Activated B cell treated with CpG ODN at 0.5 μM for 24 hours (primary cell): ENCODE measurements at regions of chr16 and their contacts with region 1.

Region 1: GRCh38 chr16:73036074-73036826 is 11.7 kb downstream of the ZFHX3 start:
- DNase-seq: no peak
- ATAC-seq: peak; percentile 87
- H3K4me3 Mint-ChIP-seq: peak overlapping the region; percentile 75
- H3K27ac Mint-ChIP-seq: peak overlapping the region; percentile 78
- H3K4me1 Mint-ChIP-seq: peaks cover 46% of the 10 kb centered on the region
- H3K27me3 Mint-ChIP-seq: peaks cover 24% of the 10 kb centered on the region
- CTCF ChIP-seq: no peak

Region 2: DNA sequence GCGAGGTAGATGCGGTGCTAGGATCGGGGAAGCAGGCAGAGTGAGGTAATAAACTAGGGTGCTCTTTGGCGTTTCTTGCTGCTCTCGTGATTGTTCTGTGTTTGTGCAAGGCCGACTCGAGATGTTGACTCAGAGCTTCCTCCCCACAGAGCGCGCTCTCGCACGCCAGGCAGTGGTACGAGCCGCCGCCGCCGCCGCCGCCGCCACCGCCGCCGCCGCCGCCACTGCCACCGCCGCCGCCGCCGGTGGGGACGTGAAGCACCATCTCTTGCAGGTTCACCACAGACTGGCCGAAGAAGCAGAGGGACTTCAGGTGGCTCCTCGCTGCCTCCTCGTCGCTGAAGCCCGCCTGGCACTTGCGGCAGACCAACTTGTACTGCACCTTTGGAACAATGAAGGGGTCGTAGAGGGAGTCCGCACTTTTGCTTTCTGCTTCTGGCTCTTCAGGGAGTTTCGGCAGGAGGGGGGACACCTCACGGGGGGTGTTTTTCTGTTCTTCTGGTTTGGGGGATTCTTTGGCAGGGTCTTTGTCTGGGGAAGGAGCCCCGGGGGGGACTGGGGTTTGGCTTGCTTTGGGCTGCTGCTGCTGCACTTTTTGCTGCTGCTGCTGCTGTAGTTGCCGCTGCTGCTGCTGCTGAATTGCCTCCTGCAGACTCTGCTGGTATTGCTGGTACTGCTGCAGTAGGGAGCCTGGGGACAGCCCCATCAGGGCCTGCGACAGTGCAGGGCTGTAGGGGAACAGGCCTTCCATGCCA is 248.6 kb before region 1 on chr16:
- CTCF ChIA-PET with region 1: no interaction called
- POLR2A ChIA-PET with region 1: no interaction called
- intact Hi-C with region 1: loop called (anchors 10 kb)
- DNase-seq: peak; percentile 56
- ATAC-seq: peak; percentile 88
- H3K4me3 Mint-ChIP-seq: peak overlapping the region; percentile 85
- H3K27ac Mint-ChIP-seq: peak overlapping the region; percentile 65
- H3K4me1 Mint-ChIP-seq: peaks cover 15% of the 10 kb centered on the region
- H3K27me3 Mint-ChIP-seq: peaks cover 5% of the 10 kb centered on the region
- CTCF ChIP-seq: no peak

Region 3: GRCh38 chr16:72908362-72909167 is 127.7 kb before region 1 on chr16:
- CTCF ChIA-PET with region 1: no interaction called
- POLR2A ChIA-PET with region 1: no interaction called
- intact Hi-C with region 1: no loop called
- DNase-seq: no peak
- ATAC-seq: peak; percentile 65
- H3K4me3 Mint-ChIP-seq: no peak overlapping the region
- H3K27ac Mint-ChIP-seq: peak overlapping the region; percentile 59
- H3K4me1 Mint-ChIP-seq: peaks cover 11% of the 10 kb centered on the region
- H3K27me3 Mint-ChIP-seq: no peaks in the 10 kb centered on the region
- CTCF ChIP-seq: no peak

Region 4: DNA sequence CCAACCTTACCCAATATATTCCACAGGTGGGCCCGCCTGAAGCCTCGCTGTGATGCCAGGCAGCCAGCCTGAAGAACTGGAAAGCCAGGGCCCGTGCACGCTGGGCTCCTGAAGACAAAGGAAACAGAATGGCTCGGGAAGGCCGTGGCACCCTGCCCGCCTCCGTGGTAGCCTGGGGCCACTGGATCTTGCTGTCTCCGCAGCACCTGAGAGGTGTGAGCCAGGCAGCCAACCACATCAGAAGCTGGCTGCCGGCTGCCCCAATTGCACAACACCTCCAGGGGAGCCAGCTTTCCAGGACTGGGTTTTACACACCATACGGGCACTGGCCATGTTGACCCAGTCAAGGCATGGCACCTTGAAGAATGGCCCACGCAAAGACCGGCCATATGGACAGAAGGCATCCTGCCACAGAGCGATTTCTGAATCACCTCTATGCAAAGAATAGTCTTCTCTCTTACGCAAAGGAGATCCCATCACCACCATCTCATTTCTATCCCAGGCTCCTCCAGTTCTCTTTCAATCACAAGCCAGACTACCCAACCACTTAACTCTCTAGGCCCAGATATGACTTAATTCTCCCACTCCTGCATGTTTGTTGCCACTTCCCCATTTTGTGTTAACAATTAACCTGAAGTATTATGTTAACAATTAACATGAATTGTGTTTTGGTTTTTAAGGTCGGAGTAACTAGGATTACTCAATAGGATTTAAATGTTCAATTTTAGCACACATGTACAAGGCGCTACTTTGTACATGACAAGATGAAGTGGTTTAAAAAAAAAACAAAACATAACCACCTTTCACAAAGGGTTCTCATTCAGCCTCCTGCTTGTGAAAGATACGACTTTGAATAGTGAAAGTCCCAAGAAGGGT is 20.4 kb before region 1 on chr16:
- CTCF ChIA-PET with region 1: no interaction called
- POLR2A ChIA-PET with region 1: interaction called, 4 read pairs
- intact Hi-C with region 1: loop called (anchors 2 kb)
- DNase-seq: no peak
- ATAC-seq: peak; percentile 66
- H3K4me3 Mint-ChIP-seq: no peak overlapping the region
- H3K27ac Mint-ChIP-seq: peak overlapping the region; percentile 0
- H3K4me1 Mint-ChIP-seq: peaks cover 18% of the 10 kb centered on the region
- H3K27me3 Mint-ChIP-seq: no peaks in the 10 kb centered on the region
- CTCF ChIP-seq: no peak

Region 5: DNA sequence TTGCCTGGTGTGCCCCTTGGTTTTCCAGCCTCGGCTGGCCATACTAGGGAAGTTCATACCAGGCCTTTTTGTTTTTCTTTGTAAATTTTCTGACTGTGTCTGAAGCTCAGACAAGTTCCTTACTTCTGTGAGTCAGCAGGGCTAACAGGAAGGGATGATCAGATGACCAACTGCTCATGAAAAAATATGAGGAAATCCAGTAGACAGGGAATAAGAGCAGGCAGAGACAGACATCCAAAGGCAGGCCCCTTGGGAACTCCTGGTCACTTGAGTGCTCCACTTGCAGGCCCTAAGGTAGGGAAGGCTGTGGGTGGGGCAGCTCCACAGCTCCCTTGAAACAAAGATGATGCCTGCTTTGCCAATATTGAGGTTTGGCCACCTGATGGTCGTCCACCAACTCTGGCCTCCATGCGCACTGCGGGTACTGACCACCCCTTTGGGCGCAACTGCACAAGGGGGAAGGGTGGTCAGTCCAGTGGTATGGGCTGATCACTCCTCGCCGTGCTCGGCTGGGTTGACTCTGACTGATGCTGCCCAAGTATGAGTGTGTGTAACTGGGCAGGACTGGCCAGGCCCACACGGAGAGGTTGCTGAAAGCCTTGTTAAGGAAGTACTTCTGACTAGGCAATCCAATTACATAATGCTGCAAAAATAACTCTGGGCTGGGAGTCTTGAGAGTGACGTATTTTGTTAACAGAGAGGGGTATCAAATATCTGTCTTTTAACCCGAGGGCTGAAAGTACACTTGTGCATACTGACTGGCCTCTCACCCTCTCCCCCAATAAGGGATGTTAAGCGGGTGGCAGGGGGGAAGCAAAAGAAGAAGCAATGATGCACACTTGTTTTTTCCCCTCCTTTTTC is 32.5 kb after region 1 on chr16:
- CTCF ChIA-PET with region 1: no interaction called
- POLR2A ChIA-PET with region 1: no interaction called
- intact Hi-C with region 1: loop called (anchors 5 kb)
- DNase-seq: no peak
- ATAC-seq: no peak
- H3K4me3 Mint-ChIP-seq: no peak overlapping the region
- H3K27ac Mint-ChIP-seq: no peak overlapping the region
- H3K4me1 Mint-ChIP-seq: peaks cover 31% of the 10 kb centered on the region
- H3K27me3 Mint-ChIP-seq: peaks cover 60% of the 10 kb centered on the region
- CTCF ChIP-seq: no peak

Region 6: DNA sequence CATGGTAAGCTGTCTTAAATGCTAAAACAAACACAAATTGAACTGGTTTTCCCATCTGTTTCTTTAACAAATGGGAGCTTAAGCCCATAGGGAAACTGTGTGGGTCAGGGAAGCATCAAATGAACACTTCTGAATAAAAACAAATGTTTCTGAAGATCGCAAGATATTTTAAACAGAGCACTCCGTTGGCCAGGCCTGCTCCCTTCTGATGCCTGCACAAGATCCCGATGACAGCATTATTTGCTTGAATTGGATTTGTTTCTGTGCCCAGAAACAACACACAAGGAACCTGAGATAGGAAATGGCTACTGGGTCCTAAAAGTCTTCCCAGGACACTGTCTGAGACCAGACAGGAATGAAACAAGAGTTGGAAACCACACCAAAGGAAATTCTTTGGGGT is 437.5 kb after region 1 on chr16:
- CTCF ChIA-PET with region 1: no interaction called
- POLR2A ChIA-PET with region 1: no interaction called
- intact Hi-C with region 1: no loop called
- DNase-seq: no peak
- ATAC-seq: no peak
- H3K4me3 Mint-ChIP-seq: no peak overlapping the region
- H3K27ac Mint-ChIP-seq: no peak overlapping the region
- H3K4me1 Mint-ChIP-seq: no peaks in the 10 kb centered on the region
- H3K27me3 Mint-ChIP-seq: no peaks in the 10 kb centered on the region
- CTCF ChIP-seq: no peak